SK-N-SH (cell line): ENCODE measurements at regions of chr5 and their contacts with region 1.

Region 1: DNA sequence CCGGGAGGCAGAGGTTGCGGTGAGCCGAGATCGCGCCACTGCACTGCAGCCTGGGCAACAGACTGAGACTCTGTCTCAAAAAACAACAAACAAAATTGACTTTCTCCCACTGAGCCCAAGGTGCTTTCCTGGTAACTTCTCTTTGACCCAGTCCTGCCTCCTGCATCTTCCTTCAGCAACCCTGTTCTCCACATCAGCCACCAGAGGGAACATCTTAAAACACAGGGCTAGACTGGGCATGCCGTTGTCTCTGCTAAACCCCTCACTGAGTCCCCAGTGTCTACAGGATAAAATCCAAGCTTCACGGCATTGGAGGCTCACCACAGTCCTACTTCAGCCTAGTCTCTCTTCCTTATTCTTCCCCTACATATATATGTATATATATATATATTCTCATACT is 39.8 kb upstream of the KCNMB1 start:
- DNase-seq: peak; percentile 28
- H3K4me3 ChIP-seq: no peak overlapping the region
- H3K27ac ChIP-seq: no peak overlapping the region
- H3K4me1 ChIP-seq: peaks cover 0 to 33% of the 10 kb centered on the region in 2 experiments; a peak in 2 of 4 replicates
- H3K27me3 ChIP-seq: no peaks in the 10 kb centered on the region; the same call in 1 of the 2 replicates
- CTCF ChIP-seq: peak; percentile 35
- EP300 ChIP-seq: no peak
- RAD21 ChIP-seq: no peak

Region 2: GRCh38 chr5:170368586-170368985 is 60.4 kb before region 1 on chr5:
- CTCF ChIA-PET with region 1: no interaction called
- POLR2A ChIA-PET with region 1: no interaction called
- DNase-seq: no peak
- H3K4me3 ChIP-seq: no peak overlapping the region
- H3K27ac ChIP-seq: no peak overlapping the region
- H3K4me1 ChIP-seq: no peaks in the 10 kb centered on the region
- H3K27me3 ChIP-seq: peaks cover 5% of the 10 kb centered on the region; the same call in 1 of the 2 replicates
- CTCF ChIP-seq: no peak
- EP300 ChIP-seq: no peak
- RAD21 ChIP-seq: no peak

Region 3: DNA sequence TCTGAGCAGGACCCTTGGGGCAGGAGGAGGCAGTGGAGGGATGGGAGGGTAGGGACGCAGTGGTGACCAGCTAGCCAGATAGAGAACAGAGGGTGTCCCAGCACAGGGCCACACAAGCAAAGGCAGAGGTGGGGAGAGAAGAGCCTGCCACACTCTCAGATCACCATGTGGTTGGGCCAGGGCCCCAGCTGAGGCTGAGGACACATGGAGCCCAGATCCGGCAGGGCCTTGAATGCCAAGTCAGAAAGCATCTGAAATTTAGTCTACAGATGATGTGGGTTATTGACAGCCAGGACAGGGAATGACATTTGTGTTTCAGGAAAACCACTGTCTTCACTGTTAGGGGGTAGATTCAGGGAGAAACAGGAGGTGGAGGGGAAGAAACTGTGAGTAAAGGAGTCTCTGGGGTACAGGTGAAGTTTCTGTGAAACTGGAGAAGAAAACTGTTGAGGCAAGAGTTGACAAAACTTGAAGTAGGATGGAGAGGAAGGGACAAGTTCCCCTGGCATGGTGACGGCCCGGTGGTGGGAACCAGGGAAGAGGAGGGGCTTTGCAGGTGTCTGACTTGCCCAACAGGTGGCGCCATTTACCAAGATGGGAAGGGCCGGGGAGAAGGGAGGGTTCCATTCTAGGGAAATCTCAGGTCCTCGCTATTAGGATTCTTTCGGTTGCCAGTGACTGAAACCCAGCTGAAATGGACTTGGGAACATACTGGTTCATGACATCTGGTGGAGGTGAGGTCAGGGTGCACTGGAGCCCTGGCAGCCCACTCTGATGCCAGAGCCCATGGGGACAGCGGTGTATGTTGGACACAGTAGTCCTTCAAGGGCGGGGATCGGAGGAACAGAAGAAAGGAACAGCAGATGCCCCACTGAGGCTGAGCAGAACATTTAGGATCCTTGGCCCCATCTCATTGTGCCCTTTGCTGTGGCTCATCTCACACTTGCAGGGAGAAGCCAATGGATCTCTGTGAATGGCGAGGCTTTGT is 174.9 kb after region 1 on chr5:
- CTCF ChIA-PET with region 1: interaction called, 134 read pairs
- POLR2A ChIA-PET with region 1: no interaction called
- DNase-seq: peak; percentile 84
- H3K4me3 ChIP-seq: no peak overlapping the region
- H3K27ac ChIP-seq: no peak overlapping the region
- H3K4me1 ChIP-seq: peaks cover 0 to 25% of the 10 kb centered on the region in 2 experiments; a peak in 1 of 4 replicates
- H3K27me3 ChIP-seq: peaks cover 14% of the 10 kb centered on the region; the same call in 1 of the 2 replicates
- CTCF ChIP-seq: peak; percentile 79
- EP300 ChIP-seq: no peak
- RAD21 ChIP-seq: peak; percentile 89

Region 4: GRCh38 chr5:170614720-170615119 is 185.7 kb after region 1 on chr5:
- CTCF ChIA-PET with region 1: interaction called, 202 read pairs
- POLR2A ChIA-PET with region 1: no interaction called
- DNase-seq: no peak
- H3K4me3 ChIP-seq: no peak overlapping the region
- H3K27ac ChIP-seq: no peak overlapping the region; a peak in 2 of 4 replicates
- H3K4me1 ChIP-seq: peaks cover 4 to 37% of the 10 kb centered on the region in 2 experiments; a peak in 2 of 4 replicates
- H3K27me3 ChIP-seq: no peaks in the 10 kb centered on the region
- CTCF ChIP-seq: no peak
- EP300 ChIP-seq: peak in 1 of 2 experiments; percentile 53; a peak in 1 of 4 replicates
- RAD21 ChIP-seq: no peak

Region 5: DNA sequence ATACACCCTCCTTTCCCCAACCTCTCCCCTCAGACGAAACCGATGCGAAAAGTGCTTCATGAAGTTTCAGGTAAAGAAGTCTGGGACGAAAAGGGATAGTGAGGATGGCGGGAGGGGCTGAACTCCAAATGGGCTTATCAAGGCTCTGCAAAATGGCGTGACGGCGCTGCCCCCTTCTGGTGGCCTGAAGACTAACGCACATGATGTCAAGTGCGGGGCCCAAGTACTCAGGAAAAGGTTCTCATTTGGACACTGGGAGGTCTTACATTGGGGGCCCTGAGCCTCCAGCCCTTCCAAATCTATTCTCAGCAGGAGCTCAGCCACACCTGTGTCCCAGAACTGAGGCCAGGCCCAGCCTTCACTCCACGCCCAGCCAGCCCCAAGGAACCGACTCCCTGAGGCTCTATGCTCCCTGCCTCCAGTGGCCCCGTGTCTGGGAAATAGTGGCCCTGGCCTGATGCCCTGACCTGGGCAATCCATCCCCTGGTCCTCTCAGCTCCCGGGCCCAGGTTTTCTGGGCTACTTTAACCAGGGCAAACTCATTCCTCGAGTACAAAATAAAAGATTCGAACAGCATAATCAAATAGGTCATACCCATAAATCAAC is 194.7 kb after region 1 on chr5:
- CTCF ChIA-PET with region 1: interaction called, 202 read pairs
- POLR2A ChIA-PET with region 1: no interaction called
- DNase-seq: peak; percentile 63
- H3K4me3 ChIP-seq: no peak overlapping the region; a peak in 1 of 4 replicates
- H3K27ac ChIP-seq: no peak overlapping the region
- H3K4me1 ChIP-seq: peaks cover 0 to 5% of the 10 kb centered on the region in 2 experiments; a peak in 1 of 4 replicates
- H3K27me3 ChIP-seq: no peaks in the 10 kb centered on the region
- CTCF ChIP-seq: peak; percentile 81
- EP300 ChIP-seq: no peak
- RAD21 ChIP-seq: peak; percentile 89